ENCODE measurements at regions of chr6 and their contacts with region 1.

Region 1: GRCh38 chr6:41723530-41724227 is 11.7 kb downstream of the TFEB start:
- DNase-seq: peak; percentile 78 to 92 (median 92)
- H3K4me3 ChIP-seq: peak overlapping the region in 3 of 7 experiments; percentile 10 to 40 (median 28)
- H3K27ac ChIP-seq: no peak overlapping the region
- H3K4me1 ChIP-seq: peaks cover 4 to 40% (median 29%) of the 10 kb centered on the region in 4 experiments
- H3K27me3 ChIP-seq: no peaks in the 10 kb centered on the region

Region 2: DNA sequence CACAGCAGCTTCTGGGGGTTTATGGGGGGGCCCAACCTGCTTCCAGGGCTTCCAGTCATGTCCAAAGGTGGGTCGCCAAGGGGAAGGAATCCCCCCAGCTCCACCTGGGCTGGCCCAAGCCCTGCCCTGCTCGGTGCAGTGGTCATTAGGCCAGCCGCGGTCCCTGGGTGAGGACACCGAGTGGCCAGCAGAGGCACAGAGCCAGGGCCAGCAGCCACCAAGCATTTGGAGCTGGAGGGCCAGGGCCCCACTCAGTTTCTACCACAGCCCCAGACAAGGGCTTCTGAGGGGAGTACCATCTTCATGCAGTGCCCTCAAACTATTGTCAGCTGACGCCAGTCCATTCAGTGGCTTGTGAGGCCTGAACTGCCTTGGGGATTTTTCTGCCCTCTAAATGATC is 27.9 kb before region 1 on chr6:
- CTCF ChIA-PET with region 1: no interaction called
- POLR2A ChIA-PET with region 1: no interaction called
- DNase-seq: no peak
- H3K4me3 ChIP-seq: no peak overlapping the region
- H3K27ac ChIP-seq: no peak overlapping the region
- H3K4me1 ChIP-seq: peaks cover 0 to 6% (median 0%) of the 10 kb centered on the region in 4 experiments
- H3K27me3 ChIP-seq: no peaks in the 10 kb centered on the region

Region 3: DNA sequence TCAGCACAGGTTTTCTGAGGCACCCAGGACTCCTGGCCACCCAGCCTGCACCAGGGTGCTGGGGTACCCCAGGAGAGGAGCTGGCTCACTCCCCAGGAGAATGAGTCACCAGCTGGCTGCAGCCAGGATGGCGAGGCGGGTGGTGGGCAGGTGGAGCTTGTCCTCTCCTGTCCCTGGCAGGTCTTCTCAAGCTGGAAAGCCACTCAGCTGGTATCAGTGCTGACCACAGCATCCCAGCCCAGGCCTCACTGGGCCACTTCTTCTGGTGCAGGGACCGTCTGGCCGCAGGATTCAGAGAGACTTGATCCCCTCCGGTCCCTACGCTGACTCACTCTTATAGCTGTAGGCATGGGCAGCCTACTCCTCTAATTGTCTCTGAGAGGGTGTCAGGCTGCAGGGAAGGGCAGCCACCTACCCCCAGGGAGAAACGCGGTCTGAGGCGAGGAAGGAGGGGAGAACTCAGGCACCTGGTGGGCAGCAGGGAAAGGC is 10.5 kb before region 1 on chr6:
- CTCF ChIA-PET with region 1: interaction called, 90 read pairs
- POLR2A ChIA-PET with region 1: no interaction called
- DNase-seq: no peak
- H3K4me3 ChIP-seq: no peak overlapping the region
- H3K27ac ChIP-seq: no peak overlapping the region
- H3K4me1 ChIP-seq: peaks cover 0 to 42% (median 3%) of the 10 kb centered on the region in 4 experiments
- H3K27me3 ChIP-seq: no peaks in the 10 kb centered on the region

Region 4: DNA sequence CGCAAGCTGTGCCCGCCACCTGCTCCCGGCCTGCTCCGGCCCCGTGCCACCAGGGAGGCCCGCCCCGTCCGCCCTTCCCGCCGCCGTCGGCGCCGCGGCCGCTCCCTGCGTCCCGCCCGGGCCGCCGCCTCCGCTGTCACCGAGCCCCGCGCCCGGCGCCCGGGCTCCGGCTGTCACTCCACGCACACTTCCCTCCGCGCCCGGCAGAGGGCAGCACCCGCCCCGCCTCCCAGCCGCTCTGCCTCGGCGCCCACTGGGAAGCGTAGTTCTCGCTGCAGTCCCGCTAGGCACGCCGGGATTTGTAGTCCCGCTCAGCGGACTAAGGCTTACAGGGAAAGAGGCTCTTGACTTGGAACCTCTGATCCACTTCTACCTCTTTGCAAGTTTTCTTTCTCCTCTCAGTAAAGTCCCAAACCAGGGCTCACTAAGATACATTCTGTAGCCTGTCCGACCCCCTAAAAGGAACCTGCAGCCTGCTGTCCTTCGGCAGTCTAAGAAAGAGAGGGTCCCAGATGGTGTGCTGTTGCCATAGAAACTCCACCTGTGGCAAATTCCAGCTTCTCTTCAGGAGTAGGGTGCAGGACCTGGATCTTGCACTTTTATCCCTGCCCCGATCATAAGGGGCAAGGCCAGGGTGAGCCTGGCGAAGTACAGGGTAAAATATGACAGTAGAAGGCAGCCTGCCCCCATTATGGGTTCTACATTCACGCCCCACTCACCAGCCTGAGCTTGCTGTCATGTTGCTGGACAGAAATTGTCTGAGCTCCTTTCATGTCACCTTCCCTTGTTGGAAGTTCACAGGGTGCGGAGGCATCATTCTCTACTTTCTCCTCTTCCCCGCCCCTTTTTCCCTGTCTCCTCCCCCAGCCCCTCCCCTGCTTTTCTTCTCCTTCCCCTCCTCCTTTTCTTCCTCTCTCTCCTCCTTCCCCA is 12.0 kb after region 1 on chr6 and contains the start of gene TFEB:
- CTCF ChIA-PET with region 1: interaction called, 13 read pairs
- POLR2A ChIA-PET with region 1: interaction called, 4 read pairs
- DNase-seq: peak; percentile 89 to 93 (median 92)
- H3K4me3 ChIP-seq: peak within 1 kb of the TSS; percentile 56 to 85 (median 69)
- H3K27ac ChIP-seq: no peak within 1 kb of the TSS
- H3K4me1 ChIP-seq: peaks cover 0 to 38% (median 22%) of the 10 kb centered on the region in 4 experiments
- H3K27me3 ChIP-seq: no peaks in the 10 kb centered on the region

Region 5: GRCh38 chr6:41801380-41801779 is 77.7 kb after region 1 on chr6:
- CTCF ChIA-PET with region 1: no interaction called
- POLR2A ChIA-PET with region 1: no interaction called
- DNase-seq: peak in 2 of 3 donors; percentile 37 to 41
- H3K4me3 ChIP-seq: no peak overlapping the region
- H3K27ac ChIP-seq: no peak overlapping the region
- H3K4me1 ChIP-seq: no peaks in the 10 kb centered on the region
- H3K27me3 ChIP-seq: no peaks in the 10 kb centered on the region

Measured in common myeloid progenitor, CD34-positive (primary cell).